MCF 10A (cell line): ENCODE measurements at regions of chr12 and their contacts with region 1.

Region 1: GRCh38 chr12:70415987-70416386 is 49.9 kb downstream of the KCNMB4 start:
- DNase-seq: no peak
- H3K4me3 Mint-ChIP-seq: no peak overlapping the region
- H3K27ac Mint-ChIP-seq: no peak overlapping the region
- H3K4me1 Mint-ChIP-seq: no peaks in the 10 kb centered on the region
- H3K27me3 Mint-ChIP-seq: no peaks in the 10 kb centered on the region
- CTCF ChIP-seq: no peak

Region 2: GRCh38 chr12:70402600-70402999 is 13.4 kb before region 1 on chr12:
- CTCF ChIA-PET with region 1: interaction called, 11 read pairs
- POLR2A ChIA-PET with region 1: no interaction called
- intact Hi-C with region 1: no loop called
- DNase-seq: peak; percentile 15
- H3K4me3 Mint-ChIP-seq: no peak overlapping the region
- H3K27ac Mint-ChIP-seq: no peak overlapping the region
- H3K4me1 Mint-ChIP-seq: no peaks in the 10 kb centered on the region
- H3K27me3 Mint-ChIP-seq: peaks cover 11% of the 10 kb centered on the region
- CTCF ChIP-seq: no peak